Sigmoid colon (tissue), 7 donors: ENCODE measurements at regions of chr19 and their contacts with region 1.

Region 1: GRCh38 chr19:58451358-58452101 is at the start of gene ZNF324B:
- DNase-seq: peak; percentile 98
- H3K4me3 ChIP-seq: peak within 1 kb of the TSS; percentile 84 to 92 (median 88)
- H3K27ac ChIP-seq: peak within 1 kb of the TSS; percentile 74 to 82 (median 78)
- H3K4me1 ChIP-seq: peaks cover 0 to 14% (median 12%) of the 10 kb centered on the region in 4 donors
- H3K27me3 ChIP-seq: peaks cover 0 to 11% (median 0%) of the 10 kb centered on the region in 3 donors
- CTCF ChIP-seq: no peak
- EP300 ChIP-seq: no peak
- POLR2A ChIP-seq: peak in 1 of 2 donors; percentile 33
- total RNA-seq, gene ZNF324B: 5.4 to 9.7 (median 6.1) TPM

Region 2: GRCh38 chr19:58408152-58409009 is 43.1 kb before region 1 on chr19 and contains the start of gene ZNF584:
- intact Hi-C with region 1: no loop called
- DNase-seq: peak; percentile 97
- H3K4me3 ChIP-seq: peak within 1 kb of the TSS; percentile 65 to 93 (median 84)
- H3K27ac ChIP-seq: peak within 1 kb of the TSS; percentile 87 to 91 (median 91)
- H3K4me1 ChIP-seq: peaks cover 0 to 26% (median 21%) of the 10 kb centered on the region in 4 donors
- H3K27me3 ChIP-seq: no peaks in the 10 kb centered on the region
- CTCF ChIP-seq: no peak
- EP300 ChIP-seq: no peak
- POLR2A ChIP-seq: peak; percentile 53 to 79
- total RNA-seq, gene ZNF584: 8.2 to 21.4 (median 12.0) TPM

Region 3: GRCh38 chr19:58466760-58467589 is 15.4 kb after region 1 on chr19 and contains the start of gene ZNF324:
- intact Hi-C with region 1: loop called (anchors 2 kb)
- DNase-seq: peak; percentile 99
- H3K4me3 ChIP-seq: peak within 1 kb of the TSS; percentile 83 to 99 (median 98)
- H3K27ac ChIP-seq: peak within 1 kb of the TSS; percentile 72 to 88 (median 86)
- H3K4me1 ChIP-seq: peaks cover 0 to 23% (median 14%) of the 10 kb centered on the region in 4 donors
- H3K27me3 ChIP-seq: no peaks in the 10 kb centered on the region
- CTCF ChIP-seq: no peak
- EP300 ChIP-seq: no peak
- POLR2A ChIP-seq: peak; percentile 25 to 36
- total RNA-seq, gene ZNF324: 10.5 to 16.4 (median 14.0) TPM

Region 4: DNA sequence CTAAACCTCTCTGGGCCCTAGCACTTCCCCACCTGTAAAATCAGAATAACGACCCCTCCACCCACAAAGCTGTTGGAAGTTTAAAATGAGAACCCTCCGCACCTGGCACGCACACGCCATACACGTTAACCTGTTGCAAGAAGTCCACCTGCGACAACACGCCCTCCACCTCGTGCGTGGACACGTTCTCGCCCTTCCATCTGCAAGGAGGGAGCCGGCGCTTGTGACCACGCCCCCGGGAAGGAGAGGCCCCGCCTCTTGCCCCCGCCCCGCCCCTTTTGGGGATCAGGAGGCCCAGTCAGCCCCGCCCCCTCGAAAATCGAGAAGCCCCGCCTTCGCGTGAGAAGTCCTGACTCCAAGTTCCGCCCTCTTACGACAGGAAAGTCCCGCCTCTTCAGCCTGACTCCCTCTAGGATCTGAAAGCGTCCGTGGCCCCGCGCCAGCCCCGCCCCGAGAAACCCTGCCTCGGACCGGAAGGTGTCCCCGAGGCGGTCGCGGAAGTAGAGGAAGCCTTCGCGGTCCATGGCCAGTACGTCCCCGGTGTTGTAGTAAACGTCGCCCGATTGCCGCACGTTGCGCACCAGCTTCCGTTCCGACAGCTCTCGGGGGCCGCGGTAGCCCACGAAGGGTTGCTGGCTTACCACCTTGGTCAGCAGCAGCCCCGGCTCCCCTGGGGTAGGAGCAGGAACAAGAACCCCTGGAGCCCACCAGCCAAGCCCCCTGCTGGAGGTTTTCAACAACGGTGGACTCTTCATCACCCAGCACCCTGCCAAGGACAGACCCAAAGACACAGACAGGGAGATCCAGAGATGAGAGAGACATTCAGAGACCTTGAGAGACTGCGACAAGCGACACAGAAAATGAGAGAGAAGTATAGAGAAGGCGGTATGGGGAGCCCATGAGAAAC is 47.7 kb after region 1 on chr19:
- intact Hi-C with region 1: loop called (anchors 2 kb)
- DNase-seq: peak; percentile 100
- H3K4me3 ChIP-seq: peak overlapping the region; percentile 48 to 60 (median 54)
- H3K27ac ChIP-seq: peak overlapping the region; percentile 76 to 85 (median 80)
- H3K4me1 ChIP-seq: peaks cover 0 to 23% (median 20%) of the 10 kb centered on the region in 4 donors
- H3K27me3 ChIP-seq: no peaks in the 10 kb centered on the region
- CTCF ChIP-seq: no peak
- EP300 ChIP-seq: no peak
- POLR2A ChIP-seq: no peak